Right lobe of liver (tissue), 6 donors: ENCODE measurements at regions of chr16 and their contacts with region 1.

Region 1: GRCh38 chr16:636206-637080 is at the start of gene METTL26:
- DNase-seq: peak; percentile 96 to 97 (median 96)
- ATAC-seq: peak; percentile 80 to 88 (median 86)
- H3K4me3 ChIP-seq: peak within 1 kb of the TSS; percentile 73 to 83 (median 77)
- H3K27ac ChIP-seq: peak within 1 kb of the TSS; percentile 93 to 96 (median 96)
- H3K4me1 ChIP-seq: peaks cover 0 to 15% (median 0%) of the 10 kb centered on the region in 4 donors
- H3K27me3 ChIP-seq: no peaks in the 10 kb centered on the region
- CTCF ChIP-seq: no peak
- POLR2A ChIP-seq: peak; percentile 64
- total RNA-seq, gene METTL26: 22.7 to 126 (median 32.6) TPM

Region 2: GRCh38 chr16:589658-590159 is 46.7 kb before region 1 on chr16 and contains the start of gene RAB40C:
- intact Hi-C with region 1: loop called in 1 of 2 experiments (anchors 10 kb)
- DNase-seq: peak; percentile 99 to 100 (median 100)
- ATAC-seq: peak; percentile 77 to 91 (median 82)
- H3K4me3 ChIP-seq: peak within 1 kb of the TSS; percentile 89 to 99 (median 90)
- H3K27ac ChIP-seq: peak within 1 kb of the TSS; percentile 87 to 97 (median 91)
- H3K4me1 ChIP-seq: peaks cover 0 to 61% (median 32%) of the 10 kb centered on the region in 4 donors
- H3K27me3 ChIP-seq: no peaks in the 10 kb centered on the region
- CTCF ChIP-seq: peak in 2 of 4 donors; percentile 9 to 37
- POLR2A ChIP-seq: no peak
- total RNA-seq, gene RAB40C: 10.0 to 14.1 (median 12.0) TPM

Region 3: DNA sequence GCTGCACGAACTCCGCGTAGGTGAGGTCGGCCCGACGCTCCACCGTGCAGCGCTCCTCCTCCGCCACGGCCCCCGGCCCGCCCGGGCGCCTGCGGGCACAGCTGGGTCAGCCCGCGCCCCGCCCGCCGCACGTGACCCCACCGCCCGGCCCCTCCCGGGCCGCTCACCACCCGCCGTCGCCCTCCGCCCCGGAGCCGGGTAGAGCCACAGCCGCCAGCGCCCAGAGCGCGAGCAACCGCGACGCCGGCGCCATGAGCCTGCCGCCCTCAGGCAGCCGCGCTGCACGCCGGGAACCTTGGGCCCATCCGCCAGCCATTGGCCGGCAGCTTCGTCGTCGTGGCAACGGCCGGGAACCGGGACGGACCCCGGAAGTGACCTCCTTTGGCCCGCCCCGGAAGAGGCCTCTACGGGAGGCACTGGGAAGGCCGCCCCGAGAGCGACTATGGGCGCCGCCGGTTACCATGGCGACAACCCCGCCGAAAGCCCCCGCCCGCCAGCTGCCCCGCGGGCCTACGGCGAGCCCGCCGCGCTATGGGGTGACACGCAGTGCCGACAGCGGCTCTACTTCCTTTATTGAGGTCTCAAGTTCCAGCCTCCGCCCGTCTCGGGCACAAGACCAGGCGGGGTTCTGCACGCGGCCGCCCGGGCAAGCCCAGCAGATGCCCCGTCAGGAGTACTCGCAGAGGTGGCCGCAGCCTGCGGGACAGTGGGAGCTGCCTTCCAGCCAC is 47.8 kb after region 1 on chr16 and contains the start of gene JMJD8:
- intact Hi-C with region 1: no loop called
- DNase-seq: peak; percentile 98
- ATAC-seq: peak; percentile 60 to 71 (median 66)
- H3K4me3 ChIP-seq: peak within 1 kb of the TSS; percentile 47 to 84 (median 68)
- H3K27ac ChIP-seq: peak within 1 kb of the TSS; percentile 32 to 40 (median 36)
- H3K4me1 ChIP-seq: peaks cover 0 to 41% (median 17%) of the 10 kb centered on the region in 4 donors
- H3K27me3 ChIP-seq: no peaks in the 10 kb centered on the region
- CTCF ChIP-seq: no peak
- POLR2A ChIP-seq: peak; percentile 63
- total RNA-seq, gene JMJD8: 26.9 to 68.1 (median 36.9) TPM

Region 4: DNA sequence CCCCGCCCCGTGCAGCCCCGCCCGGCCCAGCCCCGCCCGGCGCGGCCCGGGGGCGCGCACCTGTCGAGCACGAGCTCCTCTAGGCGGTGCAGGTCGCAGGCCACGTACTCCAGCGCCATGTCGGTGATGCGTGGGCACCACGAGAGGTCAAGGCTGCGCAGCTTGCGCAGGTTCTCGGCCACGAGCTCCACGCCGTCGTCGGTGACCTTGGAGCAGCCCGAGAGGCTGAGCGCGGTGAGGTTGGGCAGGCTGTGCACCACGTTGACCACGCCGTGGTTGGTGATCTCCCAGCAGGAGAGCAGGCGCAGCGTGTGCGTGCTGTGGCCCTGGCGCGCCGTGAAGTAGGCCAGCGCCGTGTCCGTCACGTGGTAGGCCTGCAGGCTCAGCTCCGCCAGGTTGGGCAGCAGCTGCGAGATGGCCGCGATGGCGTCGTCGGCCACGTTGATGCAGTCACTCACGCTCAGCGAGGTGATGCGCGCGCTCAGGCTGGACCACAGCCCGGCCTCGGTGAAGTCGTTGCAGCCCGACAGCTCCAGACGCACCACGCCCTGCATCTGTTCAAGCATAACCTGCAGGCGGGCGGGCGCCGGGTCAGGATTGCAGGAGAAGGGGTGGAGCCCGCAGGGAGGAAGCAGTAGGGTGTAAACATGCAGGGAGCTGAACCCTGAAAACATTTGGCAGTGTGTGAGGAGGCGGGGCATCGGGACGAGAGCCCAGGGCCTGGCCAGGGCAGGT is 59.1 kb after region 1 on chr16:
- intact Hi-C with region 1: no loop called
- DNase-seq: peak in 1 of 3 donors; percentile 33
- ATAC-seq: peak in 3 of 4 donors; percentile 8 to 47 (median 40)
- H3K4me3 ChIP-seq: no peak overlapping the region
- H3K27ac ChIP-seq: no peak overlapping the region
- H3K4me1 ChIP-seq: peaks cover 0 to 4% (median 1%) of the 10 kb centered on the region in 4 donors
- H3K27me3 ChIP-seq: peaks cover 0 to 25% of the 10 kb centered on the region in 2 donors
- CTCF ChIP-seq: no peak
- POLR2A ChIP-seq: no peak